ENCODE measurements at regions of chrX and their contacts with region 1.

Region 1: GRCh38 chrX:118552121-118552900 is 56.7 kb downstream of the DOCK11 start:
- DNase-seq: peak in 1 of 5 donors; percentile 34
- ATAC-seq: peak in 2 of 4 donors; percentile 31 to 78
- H3K4me3 ChIP-seq: no peak overlapping the region
- H3K27ac ChIP-seq: no peak overlapping the region
- H3K4me1 ChIP-seq: no peaks in the 10 kb centered on the region
- H3K27me3 ChIP-seq: peaks cover 0 to 3% (median 0%) of the 10 kb centered on the region in 9 donors
- CTCF ChIP-seq: no peak
- POLR2A ChIP-seq: no peak

Region 2: GRCh38 chrX:118484220-118484903 is 67.9 kb before region 1 on chrX:
- intact Hi-C with region 1: no loop called
- DNase-seq: no peak
- ATAC-seq: no peak
- H3K4me3 ChIP-seq: no peak overlapping the region
- H3K27ac ChIP-seq: no peak overlapping the region
- H3K4me1 ChIP-seq: no peaks in the 10 kb centered on the region
- H3K27me3 ChIP-seq: no peaks in the 10 kb centered on the region
- CTCF ChIP-seq: no peak
- POLR2A ChIP-seq: no peak

Region 3: DNA sequence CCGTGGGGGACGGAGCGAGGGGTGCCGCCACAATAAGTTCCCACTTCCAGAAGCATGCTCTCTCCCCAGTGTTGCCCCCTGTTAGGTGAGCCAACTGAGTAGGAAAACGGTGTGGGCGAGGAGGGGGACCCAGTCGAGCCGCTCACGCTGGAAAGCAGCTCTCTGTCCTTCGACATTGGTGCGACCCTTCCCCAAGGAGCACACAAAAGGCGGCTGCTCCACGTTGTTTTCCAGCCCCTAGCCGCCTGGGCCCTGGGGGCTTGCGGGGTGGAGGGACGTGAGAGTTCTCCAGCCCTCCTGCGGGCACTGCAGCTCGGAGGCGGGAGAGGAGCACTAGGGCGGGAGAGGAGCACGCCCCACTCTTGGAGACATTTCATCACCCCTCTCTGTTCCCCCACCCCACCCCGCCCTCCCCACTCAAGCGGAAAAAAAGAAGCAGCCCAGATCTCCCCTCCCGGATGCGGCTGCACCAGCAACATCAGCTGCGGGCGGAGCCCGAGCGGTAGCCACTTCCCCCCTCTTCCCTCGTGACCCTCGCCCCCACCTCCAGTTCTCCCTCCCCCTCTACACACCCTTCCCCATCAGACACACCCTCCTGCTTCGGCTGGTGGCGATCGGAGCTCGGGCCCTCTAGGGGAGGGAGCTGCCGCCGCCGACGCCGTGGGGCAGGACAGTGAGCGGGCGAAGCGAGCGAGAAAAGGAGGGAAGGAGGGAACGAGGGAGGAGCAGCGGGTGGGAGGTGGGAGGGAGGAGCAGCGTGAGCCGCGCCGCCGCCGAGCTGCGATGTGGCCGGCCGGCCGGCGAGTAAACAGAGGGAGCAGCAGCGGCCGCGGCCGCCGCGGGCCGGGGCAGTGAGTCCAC is 57.0 kb before region 1 on chrX and contains the start of gene DOCK11:
- intact Hi-C with region 1: loop called in 1 of 10 experiments (anchors 10 kb)
- DNase-seq: peak; percentile 76 to 86 (median 79)
- ATAC-seq: peak; percentile 85 to 96 (median 90)
- H3K4me3 ChIP-seq: peak within 1 kb of the TSS; percentile 42 to 79 (median 62)
- H3K27ac ChIP-seq: peak within 1 kb of the TSS; percentile 32 to 93 (median 73)
- H3K4me1 ChIP-seq: peaks cover 0 to 11% (median 0%) of the 10 kb centered on the region in 12 donors
- H3K27me3 ChIP-seq: peaks cover 0 to 18% (median 0%) of the 10 kb centered on the region in 9 donors
- CTCF ChIP-seq: no peak
- POLR2A ChIP-seq: peak in 1 of 2 donors; percentile 16
- total RNA-seq, gene DOCK11: 2.0 to 26.3 (median 3.1) TPM

Measured in heart left ventricle (tissue), 16 donors.